ENCODE measurements at regions of chr2 and their contacts with region 1.

Region 1: DNA sequence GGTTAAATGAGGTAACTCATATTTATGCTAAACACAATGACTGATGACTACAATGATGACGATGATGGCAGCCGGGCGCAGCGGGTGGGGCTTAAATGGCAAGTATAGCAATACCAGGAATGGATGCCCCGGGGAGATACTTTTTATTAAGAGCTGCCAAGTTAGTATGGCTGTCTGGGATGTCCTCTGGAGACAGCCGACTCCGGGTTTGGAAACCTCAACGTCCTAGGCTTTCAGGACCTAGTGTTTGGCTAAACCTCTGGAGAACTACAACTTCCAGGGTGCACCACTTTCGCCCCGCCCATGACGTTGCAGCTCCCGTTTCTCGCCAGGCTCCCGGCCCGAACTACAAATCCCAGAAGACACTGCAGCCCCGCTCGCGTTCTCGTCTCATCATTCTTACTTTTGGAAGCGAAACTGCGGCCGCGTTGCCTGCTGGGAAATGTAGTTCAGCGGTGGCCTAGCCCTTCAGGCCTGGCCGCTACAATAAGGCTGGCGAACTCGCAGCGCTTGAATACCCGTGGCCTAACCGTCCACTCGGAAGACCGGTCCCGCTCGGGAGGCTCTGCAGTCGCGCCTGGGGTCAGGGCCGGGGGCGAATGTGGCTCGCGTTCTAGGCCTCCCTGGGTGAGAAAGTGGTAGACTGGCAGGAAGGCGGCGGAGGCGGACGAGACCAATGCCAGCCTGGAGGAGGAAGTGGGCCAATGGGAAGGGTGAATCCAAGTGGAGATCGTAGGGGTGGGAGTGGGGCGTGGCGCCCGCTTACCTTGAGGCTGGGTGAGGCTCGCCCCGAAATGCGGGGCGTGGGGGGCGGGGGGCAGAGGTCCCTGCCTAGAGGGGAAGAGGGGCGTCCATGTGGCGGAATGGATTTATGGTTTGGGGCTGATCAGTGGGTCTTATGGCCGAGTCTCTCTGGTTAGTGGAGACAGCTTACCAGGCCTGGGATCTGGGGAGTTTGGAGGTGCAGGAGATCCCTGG is at the start of gene SMARCAL1:
- DNase-seq: peak; percentile 98
- H3K4me3 ChIP-seq: peak within 1 kb of the TSS; percentile 71
- H3K27ac ChIP-seq: peak within 1 kb of the TSS; percentile 29
- H3K4me1 ChIP-seq: peaks cover 20% of the 10 kb centered on the region
- CTCF ChIP-seq: no peak
- total RNA-seq, gene SMARCAL1: 11.0 and 12.2 TPM in 2 replicates

Region 2: GRCh38 chr2:215171151-215171550 is 1241.2 kb before region 1 on chr2:
- CTCF ChIA-PET with region 1: no interaction called
- POLR2A ChIA-PET with region 1: no interaction called
- intact Hi-C with region 1: no loop called
- DNase-seq: no peak
- H3K4me3 ChIP-seq: no peak overlapping the region
- H3K27ac ChIP-seq: no peak overlapping the region
- H3K4me1 ChIP-seq: no peaks in the 10 kb centered on the region
- CTCF ChIP-seq: no peak

Region 3: DNA sequence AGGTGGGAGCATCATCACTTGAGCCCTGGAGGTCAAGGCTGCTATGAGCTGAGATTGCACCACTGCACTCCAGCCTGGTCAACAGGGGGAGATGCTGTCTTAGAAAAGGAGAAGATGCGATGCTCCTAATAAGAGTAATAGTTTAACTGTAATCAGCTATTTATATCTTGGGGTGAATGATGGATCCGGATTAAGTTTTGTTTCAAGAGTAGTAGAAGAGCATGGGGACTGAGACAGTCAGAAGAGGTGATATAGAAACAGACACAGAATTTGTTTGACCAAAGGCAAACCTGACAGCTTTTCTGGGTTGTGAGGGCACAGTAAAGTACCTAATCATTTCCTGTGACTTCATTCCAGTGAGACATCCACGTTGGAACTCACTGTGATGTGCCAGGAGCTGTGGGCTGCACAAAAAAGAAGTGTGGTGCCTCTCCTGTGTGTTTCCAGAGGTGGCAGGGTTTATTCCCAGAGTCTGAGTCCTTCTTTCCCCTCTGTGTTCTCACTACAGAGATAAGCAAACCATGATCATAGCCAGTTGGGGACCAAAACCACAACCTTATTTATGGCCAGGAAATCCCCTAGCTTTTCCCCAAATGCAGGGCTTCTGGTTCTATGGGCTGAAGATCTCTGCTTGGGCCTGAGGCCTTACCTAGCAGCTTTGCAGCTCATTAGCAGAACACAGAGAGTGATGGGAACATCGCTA is 189.5 kb before region 1 on chr2:
- CTCF ChIA-PET with region 1: no interaction called
- POLR2A ChIA-PET with region 1: interaction called, 10 read pairs
- intact Hi-C with region 1: no loop called
- DNase-seq: peak; percentile 13
- H3K4me3 ChIP-seq: no peak overlapping the region
- H3K27ac ChIP-seq: no peak overlapping the region
- H3K4me1 ChIP-seq: peaks cover 7% of the 10 kb centered on the region
- CTCF ChIP-seq: peak; percentile 63

Region 4: GRCh38 chr2:216308576-216308975 is 103.7 kb before region 1 on chr2:
- CTCF ChIA-PET with region 1: no interaction called
- POLR2A ChIA-PET with region 1: no interaction called
- intact Hi-C with region 1: no loop called
- DNase-seq: no peak
- H3K4me3 ChIP-seq: no peak overlapping the region
- H3K27ac ChIP-seq: no peak overlapping the region
- H3K4me1 ChIP-seq: no peaks in the 10 kb centered on the region
- CTCF ChIP-seq: no peak

Measured in OCI-LY7 (cell line).